Dendritic cell treated with granulocyte-macrophage colony-stimulating factor and Interleukin-4, amounts not matched to agents 40 ng/mL and 50 ng/mL, for 4 days (primary cell): ENCODE measurements at regions of chrX and their contacts with region 1.

Region 1: DNA sequence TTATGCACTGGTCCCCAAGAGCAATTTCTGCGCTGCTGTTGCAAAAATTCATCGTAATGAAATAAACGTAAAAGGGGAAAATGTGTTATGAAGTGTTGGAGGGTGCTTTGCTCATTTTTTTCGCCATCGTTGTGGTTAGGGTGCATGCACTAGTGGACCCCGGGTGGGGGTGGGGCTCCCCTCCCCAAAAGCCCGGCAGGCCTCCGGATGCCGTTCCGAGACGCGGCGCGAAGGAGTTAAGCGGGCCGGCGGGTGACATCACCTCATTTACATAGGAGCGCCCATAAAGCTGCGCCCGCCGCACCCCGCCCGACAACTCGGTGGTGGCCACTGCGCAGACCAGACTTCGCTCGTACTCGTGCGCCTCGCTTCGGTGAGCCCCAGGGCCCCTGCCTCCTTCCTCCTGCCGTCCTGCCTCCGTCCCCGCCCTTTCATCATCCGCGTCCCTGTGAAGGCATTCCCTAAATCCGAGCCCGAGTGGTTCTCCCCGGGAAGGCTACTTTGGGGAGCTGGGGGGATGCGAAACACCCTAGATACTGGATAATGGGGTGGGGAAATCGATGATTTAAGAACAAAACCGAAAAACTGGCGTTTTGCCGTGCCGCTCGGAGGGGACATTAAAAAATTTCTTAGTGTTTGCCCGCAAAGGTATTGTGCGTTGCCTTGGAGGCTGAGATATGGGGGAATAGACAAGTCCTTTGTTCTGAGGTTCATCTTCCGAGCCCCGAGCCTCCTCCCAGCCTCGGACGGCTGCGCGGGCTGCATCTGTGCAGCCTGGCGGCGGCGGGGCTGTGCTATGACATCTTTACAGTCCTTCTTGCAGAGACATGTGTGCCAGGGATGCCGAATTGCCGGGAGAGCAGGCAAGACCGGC is at the start of gene TMSB4X:
- H3K4me3 Mint-ChIP-seq: peak within 1 kb of the TSS; percentile 98
- H3K27ac Mint-ChIP-seq: peak within 1 kb of the TSS; percentile 93
- H3K4me1 Mint-ChIP-seq: peaks cover 44% of the 10 kb centered on the region
- H3K27me3 Mint-ChIP-seq: no peaks in the 10 kb centered on the region

Region 2: DNA sequence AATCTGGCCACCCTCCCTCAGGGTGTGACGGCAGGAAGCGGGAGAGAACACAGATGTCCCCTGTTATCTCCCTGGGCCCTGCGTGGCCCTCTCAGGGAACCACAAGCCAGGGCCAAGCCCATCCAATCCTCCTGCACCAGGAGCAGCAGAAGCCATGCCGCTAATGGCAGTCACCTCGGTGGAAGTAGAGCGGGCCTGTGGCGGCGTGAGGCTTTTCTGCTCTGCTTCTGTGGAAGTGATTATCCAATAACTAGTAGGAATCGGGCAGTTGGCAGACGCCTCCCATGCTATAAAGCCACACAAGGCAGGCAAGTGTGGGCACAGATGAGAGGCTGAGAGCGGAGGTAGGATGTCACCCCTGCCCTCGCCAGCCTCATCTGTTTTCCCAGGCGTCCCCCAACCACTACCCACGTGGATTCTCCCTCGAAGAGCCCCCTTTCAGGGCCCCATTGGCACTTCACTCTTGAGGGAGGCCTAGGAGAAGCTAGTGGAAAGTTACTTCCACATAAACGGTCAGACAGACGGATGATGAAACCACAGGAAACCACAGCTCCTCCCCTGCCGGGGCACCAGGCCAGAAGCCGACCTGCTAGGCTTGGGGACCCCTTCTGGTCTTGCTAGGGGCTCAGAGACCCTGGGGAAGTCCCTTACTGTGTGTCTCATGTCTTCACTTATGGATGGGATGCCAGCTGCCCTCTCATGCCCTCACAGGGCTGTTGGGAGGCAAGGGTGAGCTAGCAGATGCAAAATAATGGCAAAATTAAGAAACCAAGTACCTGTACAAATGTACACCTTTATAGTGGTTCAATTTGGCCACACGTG is 18.9 kb before region 1 on chrX:
- intact Hi-C with region 1: loop called (anchors 2 kb)
- H3K4me3 Mint-ChIP-seq: peak overlapping the region; percentile 70
- H3K27ac Mint-ChIP-seq: peak overlapping the region; percentile 89
- H3K4me1 Mint-ChIP-seq: peaks cover 42% of the 10 kb centered on the region
- H3K27me3 Mint-ChIP-seq: no peaks in the 10 kb centered on the region

Region 3: GRCh38 chrX:13000301-13000811 is 25.3 kb after region 1 on chrX:
- intact Hi-C with region 1: loop called (anchors 2 kb)
- H3K4me3 Mint-ChIP-seq: no peak overlapping the region
- H3K27ac Mint-ChIP-seq: peak overlapping the region; percentile 85
- H3K4me1 Mint-ChIP-seq: peaks cover 30% of the 10 kb centered on the region
- H3K27me3 Mint-ChIP-seq: no peaks in the 10 kb centered on the region

Region 4: DNA sequence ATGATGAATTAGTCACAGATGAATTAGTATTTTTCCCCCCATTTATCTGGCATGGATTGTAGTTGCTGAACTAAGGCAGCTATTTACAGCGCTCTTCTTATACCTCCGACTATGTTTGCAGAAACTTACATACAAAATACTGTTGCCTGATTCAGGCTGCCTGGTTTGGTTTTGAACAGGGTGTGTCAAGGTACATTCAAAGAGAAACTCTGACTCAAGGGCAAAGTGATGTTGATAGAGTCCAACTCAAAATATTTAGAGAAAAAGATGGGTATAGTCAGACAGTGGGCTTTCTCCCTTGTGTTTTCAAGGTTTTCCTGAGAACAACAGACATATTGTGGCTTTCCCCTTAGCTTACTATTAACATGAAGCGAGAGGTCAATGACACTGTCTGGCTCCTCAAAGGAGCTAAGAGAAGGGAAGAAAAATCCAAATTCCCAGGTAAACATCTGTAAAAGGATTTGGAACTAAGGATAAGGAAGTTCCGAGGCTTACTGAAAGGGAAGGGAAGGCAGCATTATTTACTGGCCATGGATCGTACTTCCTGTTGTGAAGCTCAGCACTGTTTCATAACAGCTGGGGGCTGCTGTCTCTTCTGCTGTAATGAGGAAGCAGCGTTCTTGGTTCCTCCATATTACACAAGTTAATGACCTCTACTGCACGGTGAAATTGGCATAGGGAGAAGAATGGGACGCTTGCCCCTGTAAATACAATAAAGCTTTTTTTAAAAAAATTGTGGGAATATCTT is 38.5 kb after region 1 on chrX:
- intact Hi-C with region 1: loop called (anchors 5 kb)
- H3K4me3 Mint-ChIP-seq: no peak overlapping the region
- H3K27ac Mint-ChIP-seq: peak overlapping the region; percentile 74
- H3K4me1 Mint-ChIP-seq: peaks cover 47% of the 10 kb centered on the region
- H3K27me3 Mint-ChIP-seq: no peaks in the 10 kb centered on the region

Region 5: DNA sequence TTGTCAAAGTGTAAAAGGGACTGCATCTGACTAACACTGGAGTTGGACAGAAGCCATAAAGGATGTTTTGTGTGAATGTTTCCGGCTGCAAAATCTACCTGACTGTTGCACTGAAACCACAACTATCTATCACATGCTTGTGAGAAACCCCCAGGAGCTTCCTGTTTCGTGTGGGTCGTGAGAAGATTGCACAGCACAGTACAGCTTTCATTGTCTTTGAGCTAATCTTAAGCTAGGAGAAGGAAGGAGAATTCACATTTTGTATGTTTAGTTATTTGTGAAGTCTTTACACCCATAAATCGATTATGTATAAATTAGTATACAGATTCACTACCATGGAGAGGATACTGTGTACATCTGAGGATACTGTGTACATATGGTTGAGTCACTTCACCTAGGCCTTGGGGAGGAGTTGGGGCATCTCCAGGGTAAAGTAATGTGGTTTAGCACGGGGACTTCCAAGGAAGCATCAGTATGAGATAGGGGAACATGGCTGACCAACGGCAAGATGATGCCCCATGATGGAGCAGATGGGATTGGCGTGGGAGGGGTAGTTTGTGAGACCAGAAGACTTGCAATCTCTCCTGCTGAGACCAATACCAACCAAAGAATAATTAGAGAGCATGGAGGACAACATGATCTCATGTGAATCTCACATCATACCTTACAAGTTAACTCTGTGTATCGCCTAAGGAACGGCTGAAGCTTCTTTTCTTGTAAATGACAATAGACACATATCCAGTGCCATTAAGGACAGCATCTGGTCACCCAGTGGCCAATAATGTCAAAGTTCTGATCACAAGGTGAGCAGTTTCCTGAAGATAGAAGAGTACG is 112.5 kb after region 1 on chrX:
- intact Hi-C with region 1: loop called (anchors 5 kb)
- H3K4me3 Mint-ChIP-seq: no peak overlapping the region
- H3K27ac Mint-ChIP-seq: peak overlapping the region; percentile 77
- H3K4me1 Mint-ChIP-seq: peaks cover 44% of the 10 kb centered on the region
- H3K27me3 Mint-ChIP-seq: no peaks in the 10 kb centered on the region

Region 6: GRCh38 chrX:13190073-13190472 is 215.0 kb after region 1 on chrX:
- intact Hi-C with region 1: no loop called
- H3K4me3 Mint-ChIP-seq: no peak overlapping the region
- H3K27ac Mint-ChIP-seq: no peak overlapping the region
- H3K4me1 Mint-ChIP-seq: no peaks in the 10 kb centered on the region
- H3K27me3 Mint-ChIP-seq: no peaks in the 10 kb centered on the region